Spleen (tissue), 13 donors: ENCODE measurements at regions of chr12 and their contacts with region 1.

Region 1: GRCh38 chr12:546921-547845 is 87.4 kb downstream of the B4GALNT3 start:
- DNase-seq: peak; percentile 93
- H3K4me3 ChIP-seq: peak overlapping the region in 1 of 8 donors; percentile 24
- H3K27ac ChIP-seq: peak overlapping the region in 2 of 8 donors; percentile 8 to 51
- H3K4me1 ChIP-seq: peaks cover 6 to 26% (median 14%) of the 10 kb centered on the region in 6 donors
- H3K27me3 ChIP-seq: peaks cover 0 to 67% (median 13%) of the 10 kb centered on the region in 7 donors
- CTCF ChIP-seq: peak; percentile 95 to 99 (median 98)
- POLR2A ChIP-seq: no peak

Region 2: DNA sequence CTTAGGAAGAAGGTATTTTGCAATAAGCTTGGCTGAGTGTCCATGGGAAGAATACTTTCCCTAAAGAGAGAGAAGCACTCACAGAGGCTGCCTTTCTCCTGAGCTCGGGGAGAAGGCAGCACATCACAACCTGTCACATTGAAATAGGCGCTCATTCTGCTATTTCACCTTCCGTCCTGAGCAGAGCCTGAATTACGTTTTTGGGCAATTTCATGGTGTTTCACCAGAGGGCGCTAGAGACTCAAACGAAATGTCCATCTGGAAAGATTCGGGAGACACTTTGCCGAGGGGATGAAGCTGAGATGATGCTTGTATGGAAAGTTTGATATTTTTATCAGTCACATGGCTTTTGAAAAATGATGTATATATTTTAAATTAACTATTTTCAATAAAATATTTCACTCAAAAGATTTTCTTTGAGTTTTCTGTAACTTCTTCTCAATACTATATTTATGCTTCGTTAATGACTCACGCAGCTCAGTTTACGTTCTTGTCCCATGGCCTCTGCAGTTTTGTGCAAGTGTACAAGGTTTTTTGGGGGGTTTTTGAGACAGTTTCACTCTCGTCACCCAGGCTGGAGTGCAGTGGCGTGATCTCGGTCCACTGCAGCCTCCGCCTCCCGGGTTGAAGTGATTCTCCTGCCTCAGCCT is 104.8 kb before region 1 on chr12:
- intact Hi-C with region 1: loop called (anchors 2 kb)
- DNase-seq: no peak
- H3K4me3 ChIP-seq: no peak overlapping the region
- H3K27ac ChIP-seq: no peak overlapping the region
- H3K4me1 ChIP-seq: no peaks in the 10 kb centered on the region
- H3K27me3 ChIP-seq: no peaks in the 10 kb centered on the region
- CTCF ChIP-seq: peak; percentile 21 to 82 (median 67)
- POLR2A ChIP-seq: no peak

Region 3: GRCh38 chr12:459430-460258 is 87.5 kb before region 1 on chr12 and contains the start of gene B4GALNT3:
- intact Hi-C with region 1: loop called (anchors 5 kb)
- DNase-seq: peak; percentile 78
- H3K4me3 ChIP-seq: peak within 1 kb of the TSS; percentile 25 to 78 (median 49)
- H3K27ac ChIP-seq: no peak within 1 kb of the TSS
- H3K4me1 ChIP-seq: peaks cover 5 to 22% (median 17%) of the 10 kb centered on the region in 6 donors
- H3K27me3 ChIP-seq: peaks cover 0 to 73% (median 36%) of the 10 kb centered on the region in 7 donors
- CTCF ChIP-seq: no peak
- POLR2A ChIP-seq: no peak
- total RNA-seq, gene B4GALNT3: 0.28 to 2.0 (median 1.4) TPM